Posterior cingulate gyrus (tissue), 11 donors: ENCODE measurements at regions of chr6 and their contacts with region 1.

Region 1: GRCh38 chr6:168060521-168060931 is 18.5 kb downstream of the FRMD1 start:
- DNase-seq: peak in 8 of 10 donors; percentile 51 to 95 (median 68)

Region 2: GRCh38 chr6:168132531-168133167 is 72.1 kb after region 1 on chr6:
- intact Hi-C with region 1: loop called (anchors 5 kb)
- DNase-seq: peak; percentile 68 to 97 (median 83)